ENCODE measurements at regions of chr9 and their contacts with region 1.

Region 1: DNA sequence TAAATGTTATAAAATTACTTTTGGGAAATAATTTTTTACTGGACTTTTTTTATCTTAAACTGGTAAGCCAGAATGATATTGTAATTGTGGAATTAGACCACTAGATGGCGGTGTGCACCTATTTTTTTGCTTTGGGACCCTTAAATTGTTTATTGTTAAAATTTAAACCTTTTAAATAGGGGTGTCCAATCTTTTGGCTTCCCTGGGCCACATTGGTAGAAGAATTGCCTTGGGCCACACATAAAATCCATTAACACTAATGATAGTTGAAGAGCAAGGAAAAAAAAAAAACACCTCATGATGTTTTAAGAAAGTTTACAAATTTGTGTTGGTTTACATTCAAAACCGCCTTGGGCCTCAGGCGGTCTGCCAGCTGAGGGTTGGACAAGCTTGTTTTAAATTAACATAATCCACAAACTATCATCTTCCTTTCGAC is 28.4 kb upstream of the GADD45G start:
- DNase-seq: no peak
- H3K4me3 ChIP-seq: no peak overlapping the region
- H3K4me3 Mint-ChIP-seq: no peak overlapping the region
- H3K27ac Mint-ChIP-seq: no peak overlapping the region
- H3K4me1 ChIP-seq: no peaks in the 10 kb centered on the region
- H3K4me1 Mint-ChIP-seq: no peaks in the 10 kb centered on the region
- H3K27me3 ChIP-seq: no peaks in the 10 kb centered on the region
- H3K27me3 Mint-ChIP-seq: no peaks in the 10 kb centered on the region
- CTCF ChIP-seq: peak; percentile 38 to 51

Region 2: DNA sequence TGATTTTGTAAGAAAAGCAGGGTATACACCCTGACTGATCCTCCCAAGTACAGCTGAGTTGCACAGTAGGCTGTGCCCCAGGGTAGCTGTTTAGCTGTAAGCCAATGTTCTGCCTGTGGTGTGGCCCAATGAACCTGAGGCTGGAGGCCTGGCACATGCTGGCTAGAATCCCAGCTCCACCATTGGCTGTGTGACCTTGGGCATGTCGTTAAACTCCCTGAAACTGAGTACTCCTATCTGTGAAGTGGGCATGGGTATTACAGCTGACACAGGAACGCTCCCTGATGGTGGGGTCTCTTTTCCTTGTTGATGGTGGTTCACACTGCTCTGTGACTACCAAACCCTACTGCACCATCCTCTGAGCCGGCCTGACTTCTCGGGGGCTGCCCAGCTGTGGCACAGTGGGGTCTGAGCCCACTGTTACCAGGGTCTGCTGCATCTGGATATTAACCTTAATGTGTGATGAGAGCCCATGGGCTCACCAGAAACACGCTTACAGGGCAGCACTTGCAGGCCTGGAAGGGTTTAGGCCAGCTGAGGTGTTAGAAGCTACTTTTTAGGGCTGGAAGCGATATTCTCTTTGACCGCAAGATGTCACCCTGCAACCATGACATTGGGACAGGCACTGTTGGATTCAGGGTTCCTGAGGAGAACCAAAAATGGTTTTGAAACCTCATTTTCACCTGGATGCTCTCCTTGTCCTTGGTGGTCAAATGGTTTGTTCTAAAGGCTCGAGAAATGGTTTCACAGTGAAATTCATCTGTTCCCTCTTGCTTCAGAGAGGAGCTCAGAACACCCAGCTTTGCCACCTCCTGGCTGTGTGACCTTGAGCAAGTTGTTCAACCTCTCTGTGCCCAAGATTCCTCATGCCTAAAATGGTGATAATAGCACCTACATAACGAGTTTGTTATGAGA is 21.5 kb after region 1 on chr9:
- CTCF ChIA-PET with region 1: interaction called, 6 read pairs
- POLR2A ChIA-PET with region 1: no interaction called
- intact Hi-C with region 1: loop called (anchors 1 kb)
- DNase-seq: peak in 1 of 2 experiments; percentile 61
- H3K4me3 ChIP-seq: no peak overlapping the region
- H3K4me3 Mint-ChIP-seq: no peak overlapping the region
- H3K27ac Mint-ChIP-seq: no peak overlapping the region
- H3K4me1 ChIP-seq: peaks cover 11% of the 10 kb centered on the region
- H3K4me1 Mint-ChIP-seq: peaks cover 5% of the 10 kb centered on the region
- H3K27me3 ChIP-seq: no peaks in the 10 kb centered on the region
- H3K27me3 Mint-ChIP-seq: no peaks in the 10 kb centered on the region
- CTCF ChIP-seq: peak; percentile 57 to 62

Measured in Caco-2 (cell line).